ENCODE measurements at regions of chr1 and their contacts with region 1.

Region 1: GRCh38 chr1:42035830-42036604 is 117.2 kb upstream of the GUCA2B start:
- DNase-seq: peak; percentile 92
- ATAC-seq: peak; percentile 87
- H3K4me3 ChIP-seq: peak overlapping the region; percentile 98
- H3K27ac ChIP-seq: no peak overlapping the region
- H3K4me1 ChIP-seq: peaks cover 20% of the 10 kb centered on the region
- H3K27me3 ChIP-seq: no peaks in the 10 kb centered on the region
- CTCF ChIP-seq: no peak

Region 2: DNA sequence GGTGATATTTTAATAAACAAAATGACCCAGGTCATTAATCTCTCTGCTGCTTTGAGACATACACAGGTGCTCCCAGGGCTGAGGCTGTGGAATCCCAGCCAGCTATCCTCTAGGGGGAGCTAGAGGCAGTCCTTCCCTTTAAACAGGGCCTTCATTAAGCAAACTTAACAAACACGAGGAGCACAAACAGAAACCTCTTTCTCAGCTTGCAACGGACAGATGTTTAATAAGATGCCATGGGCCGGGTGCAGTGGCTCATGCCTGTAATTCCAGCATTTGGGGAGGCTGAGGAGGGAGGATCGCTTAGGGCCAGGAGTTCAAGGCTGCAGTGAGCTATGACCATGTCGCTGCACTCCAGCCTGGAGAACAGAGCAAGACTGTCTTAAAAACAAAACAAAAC is 224.0 kb before region 1 on chr1:
- CTCF ChIA-PET with region 1: interaction called, 3 read pairs
- POLR2A ChIA-PET with region 1: no interaction called
- intact Hi-C with region 1: loop called (anchors 10 kb)
- DNase-seq: peak; percentile 85
- ATAC-seq: peak; percentile 90
- H3K4me3 ChIP-seq: no peak overlapping the region
- H3K27ac ChIP-seq: peak overlapping the region; percentile 47
- H3K4me1 ChIP-seq: peaks cover 18% of the 10 kb centered on the region
- H3K27me3 ChIP-seq: no peaks in the 10 kb centered on the region
- CTCF ChIP-seq: peak; percentile 85

Region 3: GRCh38 chr1:41862384-41863174 is 173.4 kb before region 1 on chr1:
- CTCF ChIA-PET with region 1: no interaction called
- POLR2A ChIA-PET with region 1: no interaction called
- intact Hi-C with region 1: loop called (anchors 5 kb)
- DNase-seq: peak; percentile 96
- ATAC-seq: peak; percentile 76
- H3K4me3 ChIP-seq: peak overlapping the region; percentile 60
- H3K27ac ChIP-seq: peak overlapping the region; percentile 98
- H3K4me1 ChIP-seq: peaks cover 73% of the 10 kb centered on the region
- H3K27me3 ChIP-seq: no peaks in the 10 kb centered on the region
- CTCF ChIP-seq: no peak

Region 4: DNA sequence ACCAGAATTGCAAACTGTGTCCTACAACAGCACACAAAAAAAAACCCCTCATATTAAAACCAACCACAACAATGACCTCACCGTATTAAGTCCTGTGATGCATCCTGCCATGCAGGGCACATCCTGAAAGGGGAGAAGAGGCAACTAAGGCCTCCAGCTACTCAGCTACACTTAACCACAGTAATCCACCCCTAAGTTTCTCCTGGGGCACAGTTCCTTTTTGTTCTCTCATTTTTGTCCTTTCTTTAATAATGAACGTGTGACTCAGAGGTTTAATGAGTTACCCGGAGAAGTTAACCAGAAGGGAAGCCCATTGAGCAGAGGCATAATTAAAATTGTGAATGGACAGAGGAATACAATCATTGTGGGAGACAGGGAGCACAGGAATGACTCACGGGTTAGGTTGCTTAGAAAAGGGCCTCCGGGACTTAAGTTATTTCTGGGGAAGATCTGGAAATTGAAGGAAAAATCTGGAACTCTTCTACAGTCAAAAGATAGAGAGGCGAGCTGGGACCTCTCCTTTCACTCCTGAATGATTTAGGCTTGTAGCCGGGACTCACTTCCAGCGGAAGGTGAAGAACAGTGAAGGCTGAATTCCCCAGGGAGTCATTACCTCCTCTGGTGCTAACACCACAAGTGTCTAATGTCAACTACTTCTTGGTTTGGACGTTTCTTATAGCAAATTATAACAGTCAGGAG is 80.4 kb before region 1 on chr1:
- CTCF ChIA-PET with region 1: interaction called, 4 read pairs
- POLR2A ChIA-PET with region 1: interaction called, 11 read pairs
- intact Hi-C with region 1: loop called (anchors 5 kb)
- DNase-seq: peak; percentile 96
- ATAC-seq: peak; percentile 82
- H3K4me3 ChIP-seq: peak overlapping the region; percentile 51; the same call in 1 of the 2 replicates
- H3K27ac ChIP-seq: peak overlapping the region; percentile 99
- H3K4me1 ChIP-seq: peaks cover 62% of the 10 kb centered on the region
- H3K27me3 ChIP-seq: no peaks in the 10 kb centered on the region
- CTCF ChIP-seq: no peak

Region 5: DNA sequence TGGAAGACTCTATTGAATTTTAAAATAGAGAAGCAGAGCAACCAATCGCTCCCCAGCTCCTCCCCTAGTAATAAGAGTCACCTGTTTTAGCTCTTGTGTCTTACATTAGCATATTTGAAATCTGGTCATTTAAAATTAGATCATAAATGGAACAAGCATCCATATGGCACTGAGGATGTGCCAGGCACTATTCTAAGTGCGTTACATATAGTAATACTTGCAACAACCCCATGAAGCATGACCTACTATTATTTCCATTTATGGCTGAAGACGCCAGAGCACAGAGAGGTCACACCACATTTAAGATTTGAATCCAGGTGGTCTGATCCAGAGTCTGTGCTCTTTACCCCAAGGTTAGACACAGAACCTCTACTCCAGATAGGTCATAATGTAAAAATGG is 35.3 kb before region 1 on chr1:
- CTCF ChIA-PET with region 1: no interaction called
- POLR2A ChIA-PET with region 1: no interaction called
- intact Hi-C with region 1: no loop called
- DNase-seq: no peak
- ATAC-seq: no peak
- H3K4me3 ChIP-seq: no peak overlapping the region
- H3K27ac ChIP-seq: no peak overlapping the region
- H3K4me1 ChIP-seq: no peaks in the 10 kb centered on the region
- H3K27me3 ChIP-seq: no peaks in the 10 kb centered on the region
- CTCF ChIP-seq: no peak

Region 6: GRCh38 chr1:42165511-42166163 is 129.6 kb after region 1 on chr1:
- CTCF ChIA-PET with region 1: no interaction called
- POLR2A ChIA-PET with region 1: interaction called, 10 read pairs
- intact Hi-C with region 1: loop called (anchors 5 kb)
- DNase-seq: peak; percentile 99
- ATAC-seq: peak; percentile 91
- H3K4me3 ChIP-seq: peak overlapping the region; percentile 33; the same call in 1 of the 2 replicates
- H3K27ac ChIP-seq: peak overlapping the region; percentile 88
- H3K4me1 ChIP-seq: peaks cover 49% of the 10 kb centered on the region
- H3K27me3 ChIP-seq: no peaks in the 10 kb centered on the region
- CTCF ChIP-seq: no peak